IMR-90 (cell line): ENCODE measurements at regions of chr5 and their contacts with region 1.

Region 1: GRCh38 chr5:95961617-95962474 is at the start of gene ELL2:
- DNase-seq: peak; percentile 98
- ATAC-seq: peak; percentile 92
- H3K4me3 ChIP-seq: peak within 1 kb of the TSS; percentile 99
- H3K27ac ChIP-seq: peak within 1 kb of the TSS; percentile 99
- H3K4me1 ChIP-seq: no peaks in the 10 kb centered on the region
- H3K27me3 ChIP-seq: no peaks in the 10 kb centered on the region
- CTCF ChIP-seq: no peak
- POLR2A ChIP-seq: peak; percentile 97
- RAD21 ChIP-seq: no peak
- total RNA-seq, gene ELL2: 92.5 and 137 TPM in 2 replicates

Region 2: DNA sequence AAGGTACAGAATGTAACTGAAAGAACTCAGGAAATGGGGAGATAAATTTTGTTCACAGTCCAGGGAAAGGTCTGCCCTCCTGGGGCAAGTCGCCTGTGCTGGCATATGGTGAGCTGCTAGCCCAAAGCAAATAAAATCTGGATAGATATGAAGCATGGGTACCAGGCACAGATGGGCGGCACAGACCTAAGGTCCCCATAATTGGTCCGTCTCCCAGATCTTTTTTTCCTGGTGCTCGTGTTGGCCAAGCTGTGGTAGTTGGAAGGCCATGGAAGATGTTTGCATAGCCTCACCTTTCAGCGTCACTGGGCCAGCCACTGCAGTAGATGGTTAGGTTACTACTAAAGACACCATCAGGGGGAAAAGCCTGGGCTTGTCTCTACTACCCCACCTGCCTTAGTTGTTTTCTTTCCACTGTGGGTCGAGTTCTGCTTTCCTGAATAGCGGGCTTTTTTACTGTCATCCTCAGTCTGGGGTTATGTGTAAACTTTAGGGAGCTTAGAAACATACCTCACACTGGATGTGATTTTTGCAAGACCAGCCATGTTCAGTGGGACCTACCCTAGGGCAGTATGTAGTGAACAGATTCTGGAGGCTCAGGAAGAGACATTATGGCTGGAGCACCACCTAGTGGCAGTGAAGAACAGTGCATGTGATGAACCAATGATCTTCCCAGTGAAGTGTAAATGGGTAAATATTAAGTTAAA is 115.1 kb before region 1 on chr5:
- CTCF ChIA-PET with region 1: no interaction called
- POLR2A ChIA-PET with region 1: no interaction called
- dilution Hi-C with region 1: no loop called
- in situ Hi-C with region 1: no loop called
- intact Hi-C with region 1: no loop called
- DNase-seq: peak; percentile 79
- ATAC-seq: peak; percentile 92
- H3K4me3 ChIP-seq: no peak overlapping the region
- H3K27ac ChIP-seq: no peak overlapping the region
- H3K4me1 ChIP-seq: peaks cover 16% of the 10 kb centered on the region
- H3K27me3 ChIP-seq: no peaks in the 10 kb centered on the region
- CTCF ChIP-seq: peak; percentile 96
- POLR2A ChIP-seq: peak; percentile 50
- RAD21 ChIP-seq: peak; percentile 93

Region 3: GRCh38 chr5:95858661-95859326 is 103.1 kb before region 1 on chr5:
- CTCF ChIA-PET with region 1: no interaction called
- POLR2A ChIA-PET with region 1: no interaction called
- dilution Hi-C with region 1: no loop called
- in situ Hi-C with region 1: no loop called
- intact Hi-C with region 1: loop called (anchors 1 kb)
- DNase-seq: peak; percentile 100
- ATAC-seq: peak; percentile 80
- H3K4me3 ChIP-seq: peak overlapping the region; percentile 2; the same call in 1 of the 2 replicates
- H3K27ac ChIP-seq: peak overlapping the region; percentile 99
- H3K4me1 ChIP-seq: peaks cover 38% of the 10 kb centered on the region
- H3K27me3 ChIP-seq: no peaks in the 10 kb centered on the region
- CTCF ChIP-seq: peak; percentile 99
- POLR2A ChIP-seq: peak; percentile 42; the same call in 1 of the 2 replicates
- RAD21 ChIP-seq: peak; percentile 98

Region 4: GRCh38 chr5:96017951-96018350 is 56.1 kb after region 1 on chr5:
- CTCF ChIA-PET with region 1: no interaction called
- POLR2A ChIA-PET with region 1: no interaction called
- dilution Hi-C with region 1: no loop called
- in situ Hi-C with region 1: no loop called
- intact Hi-C with region 1: loop called (anchors 1 kb)
- DNase-seq: peak; percentile 98
- ATAC-seq: peak; percentile 80
- H3K4me3 ChIP-seq: no peak overlapping the region
- H3K27ac ChIP-seq: peak overlapping the region; percentile 70; the same call in 1 of the 2 replicates
- H3K4me1 ChIP-seq: peaks cover 10% of the 10 kb centered on the region
- H3K27me3 ChIP-seq: no peaks in the 10 kb centered on the region
- CTCF ChIP-seq: no peak
- POLR2A ChIP-seq: no peak
- RAD21 ChIP-seq: no peak

Region 5: DNA sequence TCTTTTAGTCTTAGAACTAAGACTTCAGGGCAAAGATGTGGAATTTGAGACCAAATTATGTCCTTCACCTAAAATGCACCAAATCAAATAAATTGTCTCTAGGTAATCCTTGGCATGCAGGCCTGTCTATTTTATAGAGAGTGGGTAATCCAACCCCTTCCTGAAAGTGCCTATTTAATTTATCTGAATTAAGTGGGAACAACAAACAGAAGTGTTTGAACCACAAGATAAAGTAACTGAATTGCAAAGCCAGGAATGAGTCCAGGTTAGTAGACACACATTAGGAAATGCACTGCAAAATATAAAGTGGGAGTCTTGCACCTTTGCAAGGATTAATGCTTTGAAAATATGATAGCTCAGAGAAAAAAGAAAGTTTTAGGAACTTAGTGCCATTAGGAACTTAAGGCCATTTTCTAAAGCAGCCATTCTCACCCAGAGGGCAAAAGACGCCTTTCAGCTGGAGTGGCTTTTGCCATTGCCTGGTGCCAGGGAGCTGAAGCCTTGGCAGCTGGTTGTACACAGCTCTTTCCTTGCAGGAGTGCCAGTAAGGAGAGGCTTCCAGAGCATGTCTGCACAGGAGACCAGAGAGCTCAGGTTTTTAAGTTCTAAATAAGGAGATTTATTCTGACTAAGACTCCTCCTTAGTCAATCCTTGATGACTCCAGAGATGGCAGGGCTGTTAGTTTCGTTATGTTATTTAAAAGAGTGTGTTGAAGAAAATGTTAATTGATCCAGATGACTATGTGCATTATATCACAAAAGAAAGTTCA is 151.5 kb after region 1 on chr5:
- CTCF ChIA-PET with region 1: no interaction called
- POLR2A ChIA-PET with region 1: no interaction called
- dilution Hi-C with region 1: no loop called
- in situ Hi-C with region 1: no loop called
- intact Hi-C with region 1: loop called (anchors 5 kb)
- DNase-seq: no peak
- ATAC-seq: no peak
- H3K4me3 ChIP-seq: no peak overlapping the region
- H3K27ac ChIP-seq: no peak overlapping the region
- H3K4me1 ChIP-seq: peaks cover 12% of the 10 kb centered on the region
- H3K27me3 ChIP-seq: no peaks in the 10 kb centered on the region
- CTCF ChIP-seq: no peak
- POLR2A ChIP-seq: no peak
- RAD21 ChIP-seq: no peak

Region 6: DNA sequence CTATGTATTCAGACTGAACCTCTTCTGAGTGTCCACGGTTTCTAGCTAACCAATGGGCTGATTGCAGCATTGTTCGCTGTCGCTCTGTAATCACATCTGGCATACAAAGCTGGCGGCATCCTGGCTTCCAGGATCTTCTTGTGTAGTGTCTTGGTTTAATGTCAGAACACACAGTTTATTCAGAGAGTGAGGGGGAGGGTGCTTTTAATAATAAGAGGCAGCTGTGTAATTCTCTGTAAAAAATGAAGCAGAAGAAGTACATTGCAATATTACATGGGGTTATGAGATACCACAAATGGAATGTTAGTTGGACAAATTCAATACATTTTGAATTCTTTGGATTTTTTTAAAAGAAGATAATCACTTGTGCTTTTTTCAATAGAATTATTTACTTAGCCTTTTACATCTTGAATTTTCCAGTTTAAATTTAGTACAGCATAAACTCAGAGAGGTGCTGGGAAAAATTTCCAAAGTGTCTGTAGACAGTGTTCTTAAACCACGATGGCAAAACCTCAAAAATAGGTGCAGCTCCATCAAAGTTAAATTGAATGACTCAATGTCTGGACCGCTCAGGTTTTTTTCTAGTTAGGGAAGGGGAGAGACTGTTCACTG is 265.2 kb after region 1 on chr5:
- CTCF ChIA-PET with region 1: no interaction called
- POLR2A ChIA-PET with region 1: interaction called, 6 read pairs
- dilution Hi-C with region 1: no loop called
- in situ Hi-C with region 1: no loop called
- intact Hi-C with region 1: loop called (anchors 2 kb)
- DNase-seq: peak; percentile 97
- ATAC-seq: peak; percentile 97
- H3K4me3 ChIP-seq: no peak overlapping the region
- H3K27ac ChIP-seq: peak overlapping the region; percentile 100
- H3K4me1 ChIP-seq: peaks cover 9% of the 10 kb centered on the region
- H3K27me3 ChIP-seq: no peaks in the 10 kb centered on the region
- CTCF ChIP-seq: no peak
- POLR2A ChIP-seq: no peak
- RAD21 ChIP-seq: peak; percentile 8; the same call in 1 of the 2 replicates

Region 7: DNA sequence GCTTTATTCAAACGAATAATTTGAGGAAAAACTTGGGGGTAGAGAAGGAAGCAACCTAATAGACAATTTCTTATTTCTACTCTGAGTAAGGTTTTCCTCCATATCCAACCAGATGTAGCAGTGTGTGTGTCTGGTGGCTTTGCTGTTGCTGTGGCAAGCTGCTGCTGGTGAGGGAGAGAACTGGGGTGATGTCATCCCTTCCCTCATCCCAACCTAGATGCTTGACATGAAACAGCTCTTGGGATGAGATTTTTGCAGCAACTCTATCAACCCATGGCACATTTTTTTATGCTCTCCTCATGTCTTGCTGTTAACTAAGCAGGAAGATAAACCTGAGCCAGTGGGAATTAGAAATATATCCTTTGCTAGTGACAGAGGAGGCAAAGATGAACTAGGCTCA is 335.4 kb after region 1 on chr5:
- CTCF ChIA-PET with region 1: no interaction called
- POLR2A ChIA-PET with region 1: interaction called, 3 read pairs
- dilution Hi-C with region 1: no loop called
- in situ Hi-C with region 1: no loop called
- intact Hi-C with region 1: loop called (anchors 1 kb)
- DNase-seq: peak; percentile 98
- ATAC-seq: peak; percentile 64
- H3K4me3 ChIP-seq: no peak overlapping the region
- H3K27ac ChIP-seq: peak overlapping the region; percentile 53; the same call in 1 of the 2 replicates
- H3K4me1 ChIP-seq: peaks cover 8% of the 10 kb centered on the region
- H3K27me3 ChIP-seq: no peaks in the 10 kb centered on the region
- CTCF ChIP-seq: no peak
- POLR2A ChIP-seq: peak; percentile 63; the same call in 1 of the 2 replicates
- RAD21 ChIP-seq: peak; percentile 36; the same call in 1 of the 2 replicates

Region 8: DNA sequence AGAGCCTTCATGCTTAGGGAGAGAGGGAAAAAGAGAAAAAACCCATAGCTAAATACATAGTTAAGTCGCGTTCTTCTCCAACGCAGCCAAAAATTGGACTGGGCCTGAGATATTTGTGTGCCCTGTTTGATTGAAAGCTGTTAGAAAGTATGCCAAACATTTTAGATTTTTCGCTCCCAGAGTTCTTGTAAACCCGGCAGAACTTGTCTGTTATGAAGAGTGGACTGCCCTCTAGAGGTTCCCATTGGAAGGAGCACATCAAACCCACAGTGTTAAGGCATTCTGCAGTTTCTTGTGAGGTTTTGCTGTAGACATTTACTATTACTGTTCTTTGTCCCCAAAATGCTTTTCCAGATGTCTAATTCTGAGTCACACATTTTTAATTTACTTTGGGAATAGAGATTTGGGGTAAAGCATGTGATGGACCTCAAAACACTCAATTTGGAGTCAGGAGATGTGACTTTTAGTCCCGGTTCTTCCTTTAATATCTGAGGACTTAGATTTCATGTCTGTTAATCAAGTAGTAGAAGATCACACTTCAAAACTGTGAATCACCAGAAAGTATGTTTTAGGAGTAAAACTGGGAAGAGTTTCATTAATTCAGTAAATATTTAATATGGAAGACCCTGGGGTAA is 374.6 kb after region 1 on chr5:
- CTCF ChIA-PET with region 1: no interaction called
- POLR2A ChIA-PET with region 1: interaction called, 4 read pairs
- dilution Hi-C with region 1: no loop called
- in situ Hi-C with region 1: no loop called
- intact Hi-C with region 1: loop called (anchors 1 kb)
- DNase-seq: peak; percentile 93
- ATAC-seq: peak; percentile 88
- H3K4me3 ChIP-seq: no peak overlapping the region
- H3K27ac ChIP-seq: peak overlapping the region; percentile 95; the same call in 1 of the 2 replicates
- H3K4me1 ChIP-seq: peaks cover 16% of the 10 kb centered on the region
- H3K27me3 ChIP-seq: no peaks in the 10 kb centered on the region
- CTCF ChIP-seq: peak; percentile 89
- POLR2A ChIP-seq: no peak
- RAD21 ChIP-seq: peak; percentile 97

Region 9: DNA sequence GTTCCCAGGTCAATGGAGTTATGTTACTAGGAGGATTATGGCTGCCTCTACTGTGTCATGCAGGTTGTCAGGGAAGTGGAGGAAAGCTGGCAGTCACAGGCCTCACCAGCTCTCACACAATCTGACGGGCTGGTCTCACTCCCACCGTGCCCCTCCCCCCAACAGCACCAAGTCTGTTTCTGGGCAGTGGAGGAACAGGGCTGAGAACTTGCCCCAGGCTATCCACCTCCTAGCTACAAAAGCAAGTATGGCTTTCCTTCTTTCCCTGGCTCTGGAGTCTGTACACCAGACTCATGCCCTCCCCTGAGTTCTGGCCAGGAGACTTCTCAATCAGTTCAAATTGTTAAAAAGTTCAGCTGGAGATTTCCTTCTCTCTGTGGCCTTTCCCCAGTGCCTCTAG is 1246.9 kb after region 1 on chr5:
- CTCF ChIA-PET with region 1: no interaction called
- POLR2A ChIA-PET with region 1: no interaction called
- dilution Hi-C with region 1: no loop called
- in situ Hi-C with region 1: no loop called
- intact Hi-C with region 1: no loop called
- DNase-seq: no peak
- ATAC-seq: no peak
- H3K4me3 ChIP-seq: no peak overlapping the region
- H3K27ac ChIP-seq: no peak overlapping the region
- H3K4me1 ChIP-seq: no peaks in the 10 kb centered on the region
- H3K27me3 ChIP-seq: no peaks in the 10 kb centered on the region
- CTCF ChIP-seq: no peak
- POLR2A ChIP-seq: no peak
- RAD21 ChIP-seq: no peak